Tibial artery (tissue), 4 donors: ENCODE measurements at regions of chr17 and their contacts with region 1.

Region 1: GRCh38 chr17:77085926-77086432 is 54.8 kb upstream of the SEC14L1 start:
- DNase-seq: no peak
- H3K4me3 ChIP-seq: no peak overlapping the region
- H3K27ac ChIP-seq: no peak overlapping the region
- H3K4me1 ChIP-seq: peaks cover 0 to 29% (median 21%) of the 10 kb centered on the region in 4 donors
- H3K27me3 ChIP-seq: peaks cover 0 to 22% of the 10 kb centered on the region in 2 donors
- CTCF ChIP-seq: no peak

Region 2: DNA sequence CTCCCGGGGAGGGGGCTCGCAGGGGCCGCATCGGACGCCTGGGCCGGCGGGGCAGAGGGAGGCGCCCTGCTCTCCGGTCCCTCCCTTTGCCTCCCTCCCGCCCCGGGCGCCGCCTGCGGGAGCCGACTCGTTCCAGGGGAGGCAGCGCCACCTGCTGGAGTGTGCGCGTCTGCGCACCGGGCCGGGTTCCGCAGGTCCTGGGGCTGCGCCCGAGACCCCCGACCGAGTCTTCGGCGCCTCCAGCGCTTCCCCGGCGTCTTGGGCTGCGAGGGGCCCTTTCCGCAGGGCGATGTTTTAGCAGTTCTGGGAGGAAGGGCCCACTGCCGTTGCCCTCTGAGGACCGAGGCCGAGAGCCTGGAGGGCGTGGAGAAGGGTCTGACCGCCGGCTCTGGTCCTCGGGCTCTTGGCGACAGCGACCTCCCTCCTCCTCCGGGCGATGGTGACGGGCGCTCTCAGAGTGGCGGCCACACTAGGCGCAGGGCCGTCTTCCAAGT is 161.1 kb after region 1 on chr17:
- intact Hi-C with region 1: loop called (anchors 2 kb)
- DNase-seq: peak; percentile 67 to 85
- H3K4me3 ChIP-seq: peak overlapping the region; percentile 46 to 62
- H3K27ac ChIP-seq: peak overlapping the region in 1 of 2 donors; percentile 46
- H3K4me1 ChIP-seq: peaks cover 3 to 13% (median 10%) of the 10 kb centered on the region in 4 donors
- H3K27me3 ChIP-seq: peaks cover 0 to 12% of the 10 kb centered on the region in 2 donors
- CTCF ChIP-seq: peak; percentile 98 to 99